ENCODE measurements at regions of chr13 and their contacts with region 1.

Region 1: DNA sequence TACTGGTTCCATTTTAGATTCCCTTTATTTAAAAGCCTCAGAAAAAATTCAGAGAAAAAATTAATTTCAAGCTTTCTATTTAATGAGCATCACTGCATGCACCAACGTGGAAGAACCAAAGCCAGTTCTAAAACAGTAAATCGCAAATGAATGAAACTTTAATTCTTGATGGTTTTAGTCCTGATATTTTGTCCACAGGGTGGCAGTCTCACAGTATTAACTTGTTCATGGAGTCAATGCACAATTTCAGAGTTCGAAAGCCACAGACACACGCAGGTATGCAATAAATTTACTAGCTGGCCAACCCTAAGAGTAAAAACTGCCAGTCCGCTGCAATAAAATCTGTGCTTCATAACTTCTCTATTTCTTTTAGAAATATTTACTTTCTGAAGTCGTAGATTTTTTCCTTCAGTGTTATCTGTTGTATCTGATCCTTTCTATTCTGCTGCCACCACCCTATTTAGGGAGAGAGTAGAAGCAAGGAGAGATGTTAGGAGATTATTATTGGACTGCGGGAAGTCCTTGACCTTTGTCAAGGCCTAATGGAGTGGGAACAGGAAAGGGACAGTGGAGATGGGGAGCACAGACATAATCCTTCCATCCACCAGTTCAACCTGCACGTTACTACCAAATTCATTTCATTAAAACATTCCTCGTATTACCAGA is 7.0 kb upstream of the WBP4 start:
- DNase-seq: peak in 7 of 9 donors; percentile 42 to 70 (median 56)
- ATAC-seq: peak; percentile 59
- H3K4me3 ChIP-seq: no peak overlapping the region
- H3K4me3 Mint-ChIP-seq: peak overlapping the region in 7 of 10 donors; percentile 14 to 68 (median 48)
- H3K27ac ChIP-seq: peak overlapping the region; percentile 5
- H3K27ac Mint-ChIP-seq: peak overlapping the region in 7 of 9 donors; percentile 2 to 73 (median 59)
- H3K4me1 ChIP-seq: peaks cover 0 to 12% of the 10 kb centered on the region in 2 donors
- H3K4me1 Mint-ChIP-seq: peaks cover 40 to 64% (median 54%) of the 10 kb centered on the region in 7 donors
- H3K27me3 ChIP-seq: no peaks in the 10 kb centered on the region
- H3K27me3 Mint-ChIP-seq: no peaks in the 10 kb centered on the region

Region 2: GRCh38 chr13:40963919-40964318 is 90.4 kb before region 1 on chr13:
- CTCF ChIA-PET with region 1: no interaction called
- POLR2A ChIA-PET with region 1: no interaction called
- intact Hi-C with region 1: no loop called
- DNase-seq: no peak
- ATAC-seq: peak; percentile 38
- H3K4me3 ChIP-seq: no peak overlapping the region
- H3K4me3 Mint-ChIP-seq: peak overlapping the region in 9 of 10 donors; percentile 4 to 88 (median 35)
- H3K27ac ChIP-seq: no peak overlapping the region
- H3K27ac Mint-ChIP-seq: peak overlapping the region in 4 of 9 donors; percentile 44 to 83 (median 76)
- H3K4me1 ChIP-seq: peaks cover 40 to 62% of the 10 kb centered on the region in 2 donors
- H3K4me1 Mint-ChIP-seq: peaks cover 65 to 95% (median 89%) of the 10 kb centered on the region in 7 donors
- H3K27me3 ChIP-seq: no peaks in the 10 kb centered on the region
- H3K27me3 Mint-ChIP-seq: no peaks in the 10 kb centered on the region

Region 3: DNA sequence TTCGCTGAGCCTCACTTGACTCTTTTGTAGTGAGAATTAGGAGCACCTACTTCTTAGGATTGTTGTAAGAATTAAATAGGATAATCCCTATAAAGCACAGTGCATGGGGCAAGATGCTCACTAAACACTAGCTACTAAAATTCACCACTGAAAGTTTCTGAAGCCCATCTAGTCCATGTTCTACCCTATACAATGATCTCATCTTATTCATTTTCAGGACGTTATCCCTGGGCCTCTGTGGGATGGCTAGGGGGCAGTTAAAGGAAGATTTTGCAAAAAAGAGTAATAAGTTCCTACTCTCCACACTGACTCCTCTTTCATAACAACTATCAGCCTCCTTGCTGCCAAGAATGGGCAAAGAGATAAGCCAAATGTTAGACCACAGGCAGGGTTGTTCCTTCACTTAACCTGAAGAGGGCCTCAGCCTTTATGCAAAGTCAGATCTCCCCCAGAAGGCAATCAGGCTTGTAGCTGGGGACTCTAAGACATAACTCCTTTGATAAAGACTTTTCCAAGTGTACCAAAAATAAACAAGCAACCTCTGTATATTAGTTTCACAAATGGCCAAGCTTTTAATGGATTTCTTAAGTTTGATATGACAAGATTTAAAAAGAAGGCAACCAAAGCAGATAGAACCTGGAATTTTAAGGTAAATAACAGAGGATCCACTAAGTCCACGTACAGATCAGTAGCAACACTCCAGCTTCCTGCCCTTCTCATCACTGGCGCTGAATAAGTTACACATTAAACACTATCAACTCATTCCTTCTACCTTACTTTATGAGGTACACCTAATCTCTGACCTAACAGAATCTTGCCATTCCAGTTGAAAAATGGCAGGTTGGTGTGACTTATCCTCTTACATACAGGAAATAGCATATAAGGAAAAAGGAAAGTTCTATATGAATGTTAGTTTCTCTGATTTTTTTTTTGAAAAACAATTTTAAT is 79.6 kb before region 1 on chr13:
- CTCF ChIA-PET with region 1: interaction called, 6 read pairs
- POLR2A ChIA-PET with region 1: interaction called, 27 read pairs
- intact Hi-C with region 1: loop called (anchors 1 kb)
- DNase-seq: peak in 7 of 9 donors; percentile 43 to 66 (median 52)
- ATAC-seq: peak; percentile 88
- H3K4me3 ChIP-seq: no peak overlapping the region
- H3K4me3 Mint-ChIP-seq: peak overlapping the region; percentile 68 to 94 (median 82)
- H3K27ac ChIP-seq: peak overlapping the region; percentile 86
- H3K27ac Mint-ChIP-seq: peak overlapping the region; percentile 64 to 97 (median 82)
- H3K4me1 ChIP-seq: peaks cover 75 to 80% of the 10 kb centered on the region in 2 donors
- H3K4me1 Mint-ChIP-seq: peaks cover 75 to 99% (median 95%) of the 10 kb centered on the region in 7 donors
- H3K27me3 ChIP-seq: no peaks in the 10 kb centered on the region
- H3K27me3 Mint-ChIP-seq: no peaks in the 10 kb centered on the region

Region 4: DNA sequence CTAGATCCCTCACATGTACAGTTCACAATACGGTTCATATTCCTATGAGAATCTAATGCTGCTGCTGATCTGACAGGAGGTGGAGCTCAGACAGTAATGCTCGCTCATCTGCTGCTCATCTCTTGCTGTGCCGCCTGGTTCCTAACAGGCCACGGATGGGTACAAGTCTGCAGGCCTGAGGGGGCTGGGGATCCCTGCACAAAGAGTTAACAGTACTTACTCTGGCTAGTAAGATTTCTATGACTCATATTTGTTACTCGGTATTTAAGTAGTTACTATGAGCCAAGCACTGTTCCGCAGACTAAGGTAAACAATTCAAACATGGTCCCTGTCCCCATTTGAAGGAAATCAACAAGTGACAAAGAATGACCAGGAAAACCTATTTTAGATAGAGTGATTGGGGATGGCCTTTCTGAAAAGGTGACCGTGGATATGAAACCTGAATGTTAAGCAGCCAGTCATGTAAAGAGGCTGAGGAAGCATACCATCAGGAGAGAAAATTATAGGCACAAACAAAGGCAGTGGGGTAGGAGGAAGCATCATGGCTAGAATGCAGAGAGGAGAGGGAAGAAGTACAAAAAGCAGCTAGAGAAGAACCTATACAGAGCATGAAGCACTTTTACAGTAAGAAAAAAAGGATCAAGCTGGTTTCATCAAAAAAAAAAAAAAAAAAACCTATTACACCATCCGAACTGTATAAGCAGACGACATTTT is 13.6 kb before region 1 on chr13:
- CTCF ChIA-PET with region 1: interaction called, 13 read pairs
- POLR2A ChIA-PET with region 1: no interaction called
- intact Hi-C with region 1: no loop called
- DNase-seq: no peak
- ATAC-seq: no peak
- H3K4me3 ChIP-seq: no peak overlapping the region
- H3K4me3 Mint-ChIP-seq: no peak overlapping the region
- H3K27ac ChIP-seq: no peak overlapping the region
- H3K27ac Mint-ChIP-seq: peak overlapping the region in 7 of 9 donors; percentile 6 to 64 (median 44)
- H3K4me1 ChIP-seq: no peaks in the 10 kb centered on the region
- H3K4me1 Mint-ChIP-seq: peaks cover 0 to 28% (median 15%) of the 10 kb centered on the region in 7 donors
- H3K27me3 ChIP-seq: no peaks in the 10 kb centered on the region
- H3K27me3 Mint-ChIP-seq: no peaks in the 10 kb centered on the region

Region 5: DNA sequence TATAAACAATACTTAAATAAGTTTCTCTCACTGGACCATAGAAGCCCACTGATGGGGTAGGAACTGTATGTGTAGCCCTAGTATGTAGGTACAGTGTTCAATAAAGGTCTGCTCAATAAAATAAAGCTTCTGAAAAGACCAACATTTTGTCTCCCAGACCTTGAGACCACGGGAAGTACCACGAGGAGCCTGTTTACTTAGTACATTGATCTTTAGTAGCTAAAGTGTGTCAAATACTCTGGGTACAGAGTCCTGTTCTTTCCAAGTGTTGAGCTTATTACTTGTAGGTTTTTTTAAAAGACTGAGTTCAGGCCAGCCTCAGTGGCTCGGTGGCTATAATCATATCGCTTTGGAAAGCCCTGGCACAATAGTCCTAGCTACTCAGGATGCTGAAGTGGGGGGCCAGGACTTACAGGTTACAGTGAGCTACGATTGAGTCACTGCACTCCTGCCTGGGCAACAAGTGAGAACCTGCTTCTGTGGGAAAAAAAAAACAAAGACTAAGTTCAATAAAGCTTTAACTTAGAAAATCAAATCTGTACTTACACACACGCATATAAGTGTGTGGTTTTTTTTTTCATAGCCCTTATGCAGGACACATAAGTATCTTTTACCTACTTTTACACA is 205.6 kb after region 1 on chr13:
- CTCF ChIA-PET with region 1: no interaction called
- POLR2A ChIA-PET with region 1: no interaction called
- intact Hi-C with region 1: no loop called
- DNase-seq: no peak
- ATAC-seq: no peak
- H3K4me3 ChIP-seq: no peak overlapping the region
- H3K4me3 Mint-ChIP-seq: peak overlapping the region in 2 of 10 donors; percentile 29 to 46
- H3K27ac ChIP-seq: no peak overlapping the region
- H3K27ac Mint-ChIP-seq: peak overlapping the region in 1 of 9 donors; percentile 31
- H3K4me1 ChIP-seq: peaks cover 0 to 12% of the 10 kb centered on the region in 2 donors
- H3K4me1 Mint-ChIP-seq: peaks cover 17 to 68% (median 41%) of the 10 kb centered on the region in 7 donors
- H3K27me3 ChIP-seq: no peaks in the 10 kb centered on the region
- H3K27me3 Mint-ChIP-seq: no peaks in the 10 kb centered on the region